Activated CD8-positive, alpha-beta T cell treated with anti-CD3 and anti-CD28 coated beads, Interleukin-2, amount 10 ng/mL, durations not matched to agents 7 days and 5 days (primary cell): ENCODE measurements at regions of chr1 and their contacts with region 1.

Region 1: DNA sequence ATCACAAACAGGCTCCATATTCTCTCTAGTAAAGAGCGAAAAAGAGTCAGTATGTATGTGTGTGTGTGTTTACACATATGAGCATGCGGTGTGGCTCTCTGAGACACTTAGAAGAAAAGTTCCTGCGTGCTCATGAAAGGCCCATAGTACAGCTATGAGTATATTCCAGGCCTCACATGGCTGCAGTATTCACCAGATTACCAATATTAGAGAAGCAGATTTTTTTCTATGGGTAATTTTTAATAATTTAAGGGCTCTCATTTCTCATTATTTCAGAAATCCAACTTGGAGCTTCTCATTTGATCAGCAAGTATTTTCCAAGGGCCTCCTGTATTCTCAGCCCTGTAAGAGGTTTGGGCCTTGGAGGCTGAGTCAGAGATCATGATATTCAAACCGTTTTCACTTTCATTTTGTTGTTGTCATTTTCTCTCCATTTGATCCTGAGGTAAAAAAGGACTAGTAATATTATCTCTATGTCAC is 232.9 kb upstream of the SGIP1 start:
- DNase-seq: peak; percentile 49
- ATAC-seq: peak; percentile 79
- H3K4me3 Mint-ChIP-seq: peak overlapping the region; percentile 77
- H3K27ac Mint-ChIP-seq: peak overlapping the region; percentile 88
- H3K4me1 Mint-ChIP-seq: peaks cover 41% of the 10 kb centered on the region
- H3K27me3 Mint-ChIP-seq: no peaks in the 10 kb centered on the region

Region 2: GRCh38 chr1:66271216-66271903 is 29.7 kb before region 1 on chr1:
- CTCF ChIA-PET with region 1: interaction called, 19 read pairs
- POLR2A ChIA-PET with region 1: interaction called, 9 read pairs
- DNase-seq: no peak
- ATAC-seq: no peak
- H3K4me3 Mint-ChIP-seq: no peak overlapping the region
- H3K27ac Mint-ChIP-seq: peak overlapping the region; percentile 54
- H3K4me1 Mint-ChIP-seq: peaks cover 56% of the 10 kb centered on the region
- H3K27me3 Mint-ChIP-seq: no peaks in the 10 kb centered on the region

Region 3: GRCh38 chr1:66282343-66282852 is 18.6 kb before region 1 on chr1:
- CTCF ChIA-PET with region 1: interaction called, 28 read pairs
- POLR2A ChIA-PET with region 1: interaction called, 4 read pairs
- DNase-seq: peak; percentile 72
- ATAC-seq: peak; percentile 91
- H3K4me3 Mint-ChIP-seq: no peak overlapping the region
- H3K27ac Mint-ChIP-seq: peak overlapping the region; percentile 66
- H3K4me1 Mint-ChIP-seq: peaks cover 91% of the 10 kb centered on the region
- H3K27me3 Mint-ChIP-seq: no peaks in the 10 kb centered on the region

Region 4: DNA sequence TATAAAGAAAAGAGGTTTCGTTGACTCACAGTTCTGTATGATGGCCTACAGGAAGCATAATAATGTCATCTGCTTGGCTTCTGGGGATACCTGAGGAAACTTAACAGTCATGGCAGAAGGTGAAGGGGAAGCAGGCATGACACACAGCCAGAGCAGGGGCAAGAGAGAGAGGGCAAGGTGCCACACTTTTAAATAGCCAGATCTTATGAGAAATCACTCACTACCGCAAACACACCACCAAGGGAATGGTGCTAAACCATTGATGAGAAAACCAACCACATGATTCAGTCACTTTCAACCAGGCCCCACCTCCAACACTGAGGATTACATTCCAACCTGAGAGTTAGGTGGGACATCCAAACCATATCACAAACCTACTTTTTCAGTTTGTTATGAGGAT is 13.0 kb before region 1 on chr1:
- CTCF ChIA-PET with region 1: interaction called, 28 read pairs
- POLR2A ChIA-PET with region 1: no interaction called
- DNase-seq: no peak
- ATAC-seq: no peak
- H3K4me3 Mint-ChIP-seq: no peak overlapping the region
- H3K27ac Mint-ChIP-seq: no peak overlapping the region
- H3K4me1 Mint-ChIP-seq: peaks cover 61% of the 10 kb centered on the region
- H3K27me3 Mint-ChIP-seq: no peaks in the 10 kb centered on the region

Region 5: GRCh38 chr1:66416295-66416694 is 115.3 kb after region 1 on chr1:
- CTCF ChIA-PET with region 1: no interaction called
- POLR2A ChIA-PET with region 1: no interaction called
- DNase-seq: no peak
- ATAC-seq: no peak
- H3K4me3 Mint-ChIP-seq: no peak overlapping the region
- H3K27ac Mint-ChIP-seq: no peak overlapping the region
- H3K4me1 Mint-ChIP-seq: peaks cover 21% of the 10 kb centered on the region
- H3K27me3 Mint-ChIP-seq: no peaks in the 10 kb centered on the region